KBM-7 (cell line): ENCODE measurements at regions of chr11 and their contacts with region 1.

Region 1: DNA sequence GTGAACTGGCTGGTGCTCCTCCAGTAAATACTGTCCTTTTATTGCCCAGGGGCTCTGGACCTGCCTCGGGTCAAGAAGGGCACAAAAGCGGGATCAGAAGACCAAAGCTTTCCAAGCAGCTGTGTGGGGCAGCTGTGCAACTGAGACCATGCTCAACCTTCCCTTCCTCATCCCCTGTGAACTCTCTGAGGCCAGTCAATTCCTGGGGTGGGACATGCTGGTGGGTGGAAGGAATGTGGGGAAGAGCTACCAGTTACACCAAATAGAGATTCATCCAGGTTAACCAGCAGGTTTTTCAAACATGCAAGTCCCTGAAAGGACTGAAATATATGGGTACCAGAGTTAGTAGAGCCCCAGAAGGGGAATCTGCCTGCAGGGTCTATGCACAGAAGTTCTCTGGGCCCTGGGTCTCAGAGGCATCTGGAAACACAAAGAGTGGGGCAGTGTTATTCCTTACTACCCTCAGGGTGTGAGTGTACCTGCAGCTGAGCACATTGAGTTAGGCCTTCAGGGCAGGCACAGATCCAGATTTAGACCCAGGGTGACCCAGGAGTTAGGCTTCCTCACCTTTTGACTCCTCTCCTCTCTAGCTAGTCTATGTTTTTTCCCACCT is 44.0 kb upstream of the SWAP70 start:
- DNase-seq: no peak

Region 2: GRCh38 chr11:9838961-9839360 is 219.1 kb after region 1 on chr11:
- in situ Hi-C with region 1: no loop called
- DNase-seq: no peak

Region 3: DNA sequence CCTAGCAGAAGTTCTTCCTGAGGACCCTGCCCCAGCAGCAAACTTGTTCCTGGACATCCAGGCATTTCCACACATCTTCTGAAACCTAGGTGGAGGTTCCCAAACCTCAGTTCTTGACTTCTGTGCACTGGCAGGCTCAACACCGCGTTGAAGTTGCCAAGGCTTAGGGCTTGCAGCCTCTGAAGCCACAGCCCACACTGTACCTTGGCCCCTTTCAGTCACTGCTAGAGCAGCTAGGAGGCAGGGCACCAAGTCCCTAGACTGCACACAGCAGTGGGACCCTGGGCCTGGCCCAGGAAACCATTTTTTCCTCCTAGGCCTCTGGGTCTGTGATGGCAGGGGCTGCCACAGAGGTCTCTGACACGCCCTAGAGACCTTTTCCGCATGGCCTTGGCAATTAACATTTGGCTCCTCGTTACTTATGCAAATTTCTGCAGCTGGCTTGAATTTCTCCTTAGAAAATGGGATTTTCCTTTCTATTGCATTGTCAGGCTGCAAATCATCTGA is 515.2 kb after region 1 on chr11:
- in situ Hi-C with region 1: loop called (anchors 5 kb)
- DNase-seq: no peak